Sciatic nerve (tissue), 2 donors: ENCODE measurements at regions of chr3 and their contacts with region 1.

Region 1: DNA sequence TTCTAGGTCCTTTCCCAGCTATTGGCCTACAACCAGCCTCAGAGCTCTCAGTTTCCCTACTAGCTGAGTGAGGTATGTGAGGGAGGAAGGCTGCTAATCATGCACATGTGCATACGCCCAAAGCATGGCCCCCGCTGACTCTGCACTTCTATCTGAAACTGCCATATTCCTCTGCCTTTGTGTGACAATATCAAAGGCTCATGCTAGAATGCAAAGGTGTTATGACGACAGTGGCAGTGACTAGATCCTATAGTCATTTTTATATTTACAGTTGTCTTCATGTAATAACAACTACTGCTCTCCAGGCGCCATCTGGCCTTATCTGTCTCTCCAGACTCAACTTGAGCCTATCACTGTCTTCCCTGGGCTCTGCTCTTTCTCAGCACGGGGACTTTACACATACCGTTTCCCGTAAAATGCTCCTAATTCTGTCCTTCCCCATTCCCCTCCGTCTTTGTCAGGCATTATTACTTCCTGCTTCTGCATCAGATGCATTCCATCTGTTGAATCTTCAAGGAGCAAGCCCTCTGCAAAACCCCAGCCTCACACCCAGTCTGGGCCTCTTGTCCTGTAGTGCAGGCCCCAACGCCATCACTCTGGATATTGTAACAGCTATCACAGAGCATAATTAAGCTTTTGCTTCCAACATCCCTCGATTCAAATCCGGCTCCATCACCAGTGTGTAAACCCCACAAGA is 102.5 kb downstream of the PDCD6IP start:
- DNase-seq: no peak
- ATAC-seq: no peak

Region 2: GRCh38 chr3:33833408-33834095 is 67.4 kb before region 1 on chr3:
- intact Hi-C with region 1: loop called (anchors 5 kb)
- DNase-seq: no peak
- ATAC-seq: no peak

Region 3: DNA sequence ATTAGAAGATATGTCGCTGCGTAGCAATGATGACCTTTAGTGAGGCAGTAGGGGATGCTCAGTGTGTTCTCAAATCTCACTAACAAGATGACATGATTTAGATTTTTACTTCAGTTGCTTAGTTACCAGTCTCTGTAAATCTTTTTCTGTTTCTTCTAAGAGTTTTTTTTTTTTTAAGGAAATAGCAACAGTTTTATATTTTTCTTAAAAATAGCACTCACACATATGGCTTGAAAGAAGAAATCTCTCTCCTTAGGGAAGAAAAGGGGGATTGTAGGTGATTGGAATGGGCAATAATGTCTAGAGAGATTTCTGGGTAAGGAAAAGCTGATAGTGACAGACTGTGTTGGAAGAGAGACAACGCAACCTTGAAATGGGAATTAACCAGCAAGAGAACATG is 1213.7 kb after region 1 on chr3:
- intact Hi-C with region 1: no loop called
- DNase-seq: no peak
- ATAC-seq: no peak